ENCODE measurements at regions of chr4 and their contacts with region 1.

Region 1: GRCh38 chr4:73869130-73870050 is at the start of gene CXCL1:
- DNase-seq: peak; percentile 66
- H3K4me3 ChIP-seq: peak within 1 kb of the TSS; percentile 57 to 66 (median 59)
- H3K27ac ChIP-seq: peak within 1 kb of the TSS; percentile 65
- H3K4me1 ChIP-seq: peaks cover 27% of the 10 kb centered on the region
- H3K27me3 ChIP-seq: no peaks in the 10 kb centered on the region
- CTCF ChIP-seq: peak in 1 of 2 donors; percentile 4
- total RNA-seq, gene CXCL1: 11.7 to 43.3 TPM

Region 2: GRCh38 chr4:73019462-73020047 is 849.8 kb before region 1 on chr4:
- CTCF ChIA-PET with region 1: no interaction called
- dilution Hi-C with region 1: no loop called
- in situ Hi-C with region 1: no loop called
- intact Hi-C with region 1: no loop called
- DNase-seq: peak; percentile 19
- H3K4me3 ChIP-seq: no peak overlapping the region
- H3K27ac ChIP-seq: no peak overlapping the region
- H3K4me1 ChIP-seq: no peaks in the 10 kb centered on the region
- H3K27me3 ChIP-seq: peaks cover 2% of the 10 kb centered on the region
- CTCF ChIP-seq: peak; percentile 62 to 64

Region 3: DNA sequence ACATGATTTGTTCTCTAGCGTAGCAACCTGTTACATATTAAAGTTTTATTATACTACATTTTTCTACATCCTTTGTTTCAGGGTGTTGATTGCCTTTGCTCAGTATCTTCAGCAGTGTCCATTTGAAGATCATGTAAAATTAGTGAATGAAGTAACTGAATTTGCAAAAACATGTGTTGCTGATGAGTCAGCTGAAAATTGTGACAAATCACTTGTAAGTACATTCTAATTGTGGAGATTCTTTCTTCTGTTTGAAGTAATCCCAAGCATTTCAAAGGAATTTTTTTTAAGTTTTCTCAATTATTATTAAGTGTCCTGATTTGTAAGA is 462.9 kb before region 1 on chr4:
- CTCF ChIA-PET with region 1: no interaction called
- dilution Hi-C with region 1: no loop called
- in situ Hi-C with region 1: no loop called
- intact Hi-C with region 1: no loop called
- DNase-seq: no peak
- H3K4me3 ChIP-seq: no peak overlapping the region
- H3K27ac ChIP-seq: no peak overlapping the region
- H3K4me1 ChIP-seq: no peaks in the 10 kb centered on the region
- H3K27me3 ChIP-seq: no peaks in the 10 kb centered on the region
- CTCF ChIP-seq: no peak

Region 4: DNA sequence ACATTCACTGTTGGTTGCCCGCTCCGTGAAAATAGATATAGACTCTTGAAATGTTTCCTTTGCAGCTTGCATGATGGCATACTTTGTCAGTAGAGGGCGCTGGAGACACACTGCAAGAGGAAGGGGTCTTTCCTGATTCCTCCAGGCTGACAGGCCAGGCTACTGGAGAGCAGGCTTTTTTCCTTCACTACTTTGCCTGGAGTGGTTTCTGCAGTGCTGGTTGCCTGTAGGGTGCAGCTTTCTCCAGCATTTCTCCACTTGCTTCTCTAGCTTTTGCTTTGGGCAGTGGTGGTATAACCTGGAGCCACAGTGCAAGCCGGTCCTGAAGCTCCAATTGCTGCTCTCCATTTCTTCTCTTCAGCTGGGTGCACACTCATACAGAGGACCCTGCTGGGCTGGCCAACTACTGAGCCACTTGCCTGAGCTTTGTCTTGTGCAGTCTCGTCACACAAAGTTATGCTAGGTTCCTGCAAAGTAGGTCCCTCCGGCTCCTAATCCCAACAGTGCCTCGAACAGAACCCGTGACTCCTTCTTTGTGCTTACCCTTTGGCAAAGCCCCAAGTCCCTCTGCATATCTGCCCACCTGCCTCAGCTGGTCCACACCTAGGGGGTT is 295.5 kb before region 1 on chr4:
- CTCF ChIA-PET with region 1: no interaction called
- dilution Hi-C with region 1: no loop called
- in situ Hi-C with region 1: no loop called
- intact Hi-C with region 1: loop called (anchors 5 kb)
- DNase-seq: peak; percentile 52
- H3K4me3 ChIP-seq: no peak overlapping the region
- H3K27ac ChIP-seq: no peak overlapping the region
- H3K4me1 ChIP-seq: peaks cover 5% of the 10 kb centered on the region
- H3K27me3 ChIP-seq: no peaks in the 10 kb centered on the region
- CTCF ChIP-seq: peak; percentile 89

Region 5: DNA sequence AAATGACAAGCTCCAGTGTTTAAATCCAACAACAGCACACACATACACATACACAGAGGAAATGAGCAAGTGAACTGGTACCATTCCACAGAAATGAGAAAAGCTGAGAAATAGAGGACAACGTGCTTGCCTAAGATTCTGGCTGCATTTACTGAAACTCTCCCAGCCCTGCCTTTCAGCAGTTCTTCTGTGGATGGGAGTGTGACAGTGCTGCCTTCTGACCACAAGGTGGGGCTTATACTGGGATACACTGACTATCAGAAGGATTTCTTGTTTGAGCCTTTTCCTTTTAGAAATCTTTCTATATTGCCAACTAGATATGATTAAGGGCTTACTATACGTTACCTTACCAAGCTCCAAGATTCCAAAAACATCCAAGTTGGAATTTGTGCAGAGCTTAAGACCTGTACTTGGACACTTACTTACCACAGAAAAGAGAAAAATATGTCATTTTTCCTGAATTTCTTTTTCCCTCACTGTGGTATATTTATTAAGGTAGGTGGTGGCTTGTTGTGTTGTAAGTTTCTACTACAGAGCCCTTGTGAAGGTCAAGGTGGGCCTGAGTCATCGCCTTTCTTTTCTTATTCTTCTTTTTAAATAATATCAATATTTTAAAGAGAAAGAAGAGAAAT is 139.7 kb before region 1 on chr4:
- CTCF ChIA-PET with region 1: no interaction called
- dilution Hi-C with region 1: no loop called
- in situ Hi-C with region 1: loop called in 1 of 2 experiments (anchors 25 kb)
- intact Hi-C with region 1: loop called (anchors 1 kb)
- DNase-seq: peak; percentile 84
- H3K4me3 ChIP-seq: no peak overlapping the region
- H3K27ac ChIP-seq: no peak overlapping the region
- H3K4me1 ChIP-seq: peaks cover 35% of the 10 kb centered on the region
- H3K27me3 ChIP-seq: no peaks in the 10 kb centered on the region
- CTCF ChIP-seq: peak; percentile 88 to 96

Region 6: DNA sequence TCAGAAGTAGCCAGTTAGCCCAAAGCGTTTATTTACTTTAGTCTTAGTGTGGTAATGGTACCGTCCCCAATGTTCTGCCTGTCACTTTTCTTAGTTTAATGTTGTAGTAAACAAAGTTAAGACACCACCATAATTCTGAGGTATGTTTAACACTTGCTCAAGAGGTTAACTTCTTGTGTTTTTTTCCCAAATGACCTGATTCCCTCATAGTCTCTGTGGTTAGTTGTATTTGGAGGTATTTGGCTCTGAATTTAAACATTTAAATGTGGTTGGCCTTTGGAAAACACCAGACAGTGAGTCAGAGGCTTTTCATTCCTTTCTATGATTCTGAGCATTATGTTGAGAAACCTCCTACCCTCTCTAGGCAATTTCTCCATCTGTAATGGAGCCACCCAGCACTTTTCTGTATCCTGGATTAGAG is 47.7 kb after region 1 on chr4:
- CTCF ChIA-PET with region 1: no interaction called
- dilution Hi-C with region 1: loop called (anchors 5 kb)
- in situ Hi-C with region 1: loop called in 1 of 2 experiments (anchors 5 kb)
- intact Hi-C with region 1: loop called (anchors 1 kb)
- DNase-seq: peak; percentile 95
- H3K4me3 ChIP-seq: no peak overlapping the region
- H3K27ac ChIP-seq: peak overlapping the region; percentile 67
- H3K4me1 ChIP-seq: peaks cover 36% of the 10 kb centered on the region
- H3K27me3 ChIP-seq: no peaks in the 10 kb centered on the region
- CTCF ChIP-seq: no peak

Region 7: DNA sequence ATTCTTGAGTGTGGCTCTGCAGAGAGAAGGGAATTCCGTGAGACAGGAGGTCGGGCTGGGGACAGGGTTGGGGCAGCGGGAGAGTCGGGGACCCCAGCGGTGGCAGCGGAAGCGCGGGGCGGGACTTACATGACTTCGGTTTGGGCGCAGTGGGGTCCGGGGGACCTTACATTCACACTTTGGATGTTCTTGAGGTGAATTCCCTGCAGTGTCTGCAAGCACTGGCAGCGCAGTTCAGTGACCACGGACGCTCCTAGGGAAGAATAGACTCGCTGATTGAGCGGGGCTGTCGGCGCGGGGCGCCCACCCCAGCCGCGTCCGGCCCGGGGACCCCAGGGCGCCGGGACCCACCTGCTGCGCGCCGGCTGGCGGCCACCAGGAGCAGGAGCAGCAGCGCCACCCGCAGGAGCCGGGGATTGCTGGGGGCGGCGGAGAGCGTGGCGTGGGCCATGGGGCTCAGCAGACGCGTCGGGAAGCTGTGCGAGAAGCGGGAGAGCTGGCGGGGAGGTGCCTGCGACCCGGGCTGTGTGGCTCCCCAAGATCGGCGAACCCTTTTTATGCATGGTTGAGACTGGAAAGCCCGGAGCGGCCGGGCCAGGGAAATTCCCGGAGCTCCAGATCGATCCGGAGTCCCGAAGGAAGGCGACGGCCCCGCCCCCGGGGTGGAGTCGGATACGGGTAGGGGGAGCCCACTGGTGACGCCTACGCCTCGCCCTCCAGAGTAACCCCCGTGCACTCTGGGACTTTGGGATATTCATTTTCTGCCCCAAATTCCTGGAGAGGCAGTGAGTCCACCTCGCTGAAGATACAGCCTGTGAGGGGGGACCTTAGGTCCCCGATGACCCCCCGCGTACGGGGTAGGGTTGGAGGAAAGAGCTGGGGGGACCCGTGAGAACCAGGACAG is 169.0 kb after region 1 on chr4 and contains the start of gene CXCL3:
- CTCF ChIA-PET with region 1: interaction called, 4 read pairs
- dilution Hi-C with region 1: no loop called
- in situ Hi-C with region 1: no loop called
- intact Hi-C with region 1: loop called (anchors 1 kb)
- DNase-seq: peak; percentile 94
- H3K4me3 ChIP-seq: peak within 1 kb of the TSS; percentile 73 to 82 (median 77)
- H3K27ac ChIP-seq: peak within 1 kb of the TSS; percentile 86
- H3K4me1 ChIP-seq: peaks cover 18% of the 10 kb centered on the region
- H3K27me3 ChIP-seq: no peaks in the 10 kb centered on the region
- CTCF ChIP-seq: peak; percentile 2 to 30
- total RNA-seq, gene CXCL3: 1.3 to 29.4 TPM

Region 8: DNA sequence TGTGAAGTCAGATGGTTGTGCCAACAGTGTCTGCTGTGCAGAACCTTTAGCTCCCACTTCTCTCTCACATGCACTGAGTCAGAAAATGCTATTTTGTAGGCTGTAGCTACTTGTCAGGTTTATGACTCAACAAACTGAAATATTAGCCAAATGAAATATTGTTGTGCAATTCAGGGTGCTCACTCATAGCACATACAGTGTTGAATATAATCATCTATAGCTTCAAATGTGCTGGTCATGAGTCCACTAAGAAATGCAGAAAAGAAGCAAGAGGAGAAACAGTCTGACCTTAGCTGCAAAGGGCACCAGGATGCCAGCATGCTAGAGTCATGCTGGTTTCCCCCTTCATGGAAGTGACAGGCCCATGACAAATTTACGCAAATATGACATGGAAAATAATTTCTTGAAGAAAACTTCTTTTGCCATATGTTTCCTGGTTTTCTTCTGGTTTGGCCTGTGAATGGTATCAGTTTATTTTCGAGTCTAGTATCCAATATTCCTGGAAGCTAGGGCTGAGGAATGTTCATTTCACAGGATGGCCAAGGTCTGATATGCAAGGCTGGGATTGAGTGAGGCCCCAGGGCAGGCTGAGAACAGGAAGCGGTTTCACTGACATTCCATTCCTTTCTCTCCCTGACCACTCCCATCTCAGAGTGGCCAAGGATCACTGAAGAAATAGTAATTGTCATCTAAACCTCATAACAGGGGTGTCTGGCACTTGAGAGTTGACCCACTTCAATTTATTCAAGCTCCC is 239.9 kb after region 1 on chr4:
- CTCF ChIA-PET with region 1: no interaction called
- dilution Hi-C with region 1: no loop called
- in situ Hi-C with region 1: no loop called
- intact Hi-C with region 1: loop called (anchors 1 kb)
- DNase-seq: peak; percentile 98
- H3K4me3 ChIP-seq: peak overlapping the region in 2 of 3 experiments; percentile 5 to 15
- H3K27ac ChIP-seq: peak overlapping the region; percentile 99
- H3K4me1 ChIP-seq: peaks cover 65% of the 10 kb centered on the region
- H3K27me3 ChIP-seq: no peaks in the 10 kb centered on the region
- CTCF ChIP-seq: no peak

Region 9: GRCh38 chr4:74311696-74312313 is 442.4 kb after region 1 on chr4:
- CTCF ChIA-PET with region 1: no interaction called
- dilution Hi-C with region 1: no loop called
- in situ Hi-C with region 1: no loop called
- intact Hi-C with region 1: loop called (anchors 1 kb)
- DNase-seq: peak; percentile 56
- H3K4me3 ChIP-seq: no peak overlapping the region
- H3K27ac ChIP-seq: no peak overlapping the region
- H3K4me1 ChIP-seq: peaks cover 22% of the 10 kb centered on the region
- H3K27me3 ChIP-seq: no peaks in the 10 kb centered on the region
- CTCF ChIP-seq: peak; percentile 57 to 71